Activated naive CD4-positive, alpha-beta T cell treated with anti-CD3 and anti-CD28 coated beads for 36 hours (primary cell): ENCODE measurements at regions of chr3 and their contacts with region 1.

Region 1: DNA sequence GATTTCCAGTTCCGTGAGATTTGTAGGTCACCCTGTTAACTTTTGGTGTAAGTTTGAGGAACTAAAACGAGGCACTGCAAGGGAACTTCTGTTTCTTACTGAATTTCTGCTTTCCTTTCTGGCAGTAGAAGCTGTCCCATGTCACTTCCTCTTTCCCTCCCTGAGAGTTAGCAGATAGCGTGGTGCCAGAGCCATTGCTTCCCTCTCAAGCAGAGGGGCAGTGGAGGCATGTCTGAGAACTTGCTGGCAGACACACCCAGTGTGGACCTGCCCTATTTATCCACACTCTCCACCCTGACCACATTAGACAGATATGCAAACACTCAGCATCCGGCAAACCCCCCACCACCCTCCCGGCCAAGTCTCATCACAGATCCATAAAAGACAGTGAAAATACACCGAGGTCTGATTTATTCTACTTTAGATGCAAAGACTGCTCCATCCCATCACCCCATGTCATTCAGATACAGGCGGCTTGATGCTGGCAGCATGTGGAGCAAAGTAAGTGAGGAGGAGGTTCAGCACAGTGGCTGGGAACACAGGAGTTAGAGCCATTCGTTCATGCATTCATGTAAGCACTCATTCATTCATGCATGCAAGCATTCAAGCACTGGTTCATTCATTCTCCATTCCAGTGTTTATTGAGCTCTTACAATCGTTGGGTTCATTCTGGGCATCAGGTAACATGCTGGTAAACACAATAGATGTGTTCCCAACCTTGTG is 324.7 kb downstream of the SHQ1 start:
- DNase-seq: peak; percentile 30
- H3K4me3 Mint-ChIP-seq: no peak overlapping the region
- H3K27ac Mint-ChIP-seq: no peak overlapping the region
- H3K4me1 Mint-ChIP-seq: peaks cover 44% of the 10 kb centered on the region
- H3K27me3 Mint-ChIP-seq: peaks cover 2% of the 10 kb centered on the region

Region 2: GRCh38 chr3:72375237-72376076 is 148.1 kb before region 1 on chr3:
- CTCF ChIA-PET with region 1: no interaction called
- intact Hi-C with region 1: loop called (anchors 1 kb)
- DNase-seq: peak; percentile 70
- H3K4me3 Mint-ChIP-seq: peak overlapping the region; percentile 20
- H3K27ac Mint-ChIP-seq: peak overlapping the region; percentile 82
- H3K4me1 Mint-ChIP-seq: peaks cover 62% of the 10 kb centered on the region
- H3K27me3 Mint-ChIP-seq: no peaks in the 10 kb centered on the region

Region 3: DNA sequence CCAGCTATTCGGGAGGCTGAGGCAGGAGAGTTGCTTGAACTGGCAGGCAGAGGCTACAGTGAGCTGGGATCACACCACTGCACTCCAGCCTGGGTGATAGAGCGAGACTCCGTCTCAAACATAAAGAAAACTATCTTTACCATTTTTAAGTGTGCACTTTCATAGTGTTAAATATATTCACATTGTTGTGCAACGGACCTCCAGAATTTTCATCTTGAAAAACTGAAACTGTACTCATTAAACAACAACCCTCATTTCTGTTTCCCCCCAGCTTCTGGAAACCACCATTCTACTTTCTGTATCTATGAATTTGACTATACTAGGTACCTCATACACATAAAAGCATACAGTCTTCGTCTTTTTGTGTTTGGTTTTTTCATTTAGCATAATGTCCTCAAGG is 50.4 kb before region 1 on chr3:
- CTCF ChIA-PET with region 1: no interaction called
- intact Hi-C with region 1: loop called (anchors 1 kb)
- DNase-seq: no peak
- H3K4me3 Mint-ChIP-seq: no peak overlapping the region
- H3K27ac Mint-ChIP-seq: peak overlapping the region; percentile 17
- H3K4me1 Mint-ChIP-seq: peaks cover 36% of the 10 kb centered on the region
- H3K27me3 Mint-ChIP-seq: no peaks in the 10 kb centered on the region

Region 4: DNA sequence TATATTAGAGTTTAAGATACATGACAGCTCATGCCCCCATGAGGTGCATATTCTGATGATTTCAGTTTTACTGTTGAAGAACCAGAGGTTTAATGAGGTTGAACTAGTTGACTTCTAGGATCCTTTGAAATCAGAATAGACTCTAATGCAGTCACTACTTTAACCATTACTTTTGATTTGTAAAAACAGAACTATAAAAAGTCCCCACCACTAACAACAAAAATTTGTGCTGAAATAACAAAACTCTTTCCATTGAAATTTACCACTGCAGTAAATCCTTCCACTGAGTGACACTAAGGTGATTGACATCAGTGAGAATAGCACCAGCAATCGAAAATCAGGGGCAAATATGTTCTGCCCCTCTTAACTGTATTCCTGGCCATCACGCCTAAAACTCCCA is 110.5 kb after region 1 on chr3:
- CTCF ChIA-PET with region 1: interaction called, 3 read pairs
- intact Hi-C with region 1: loop called (anchors 1 kb)
- DNase-seq: peak; percentile 19
- H3K4me3 Mint-ChIP-seq: no peak overlapping the region
- H3K27ac Mint-ChIP-seq: no peak overlapping the region
- H3K4me1 Mint-ChIP-seq: peaks cover 39% of the 10 kb centered on the region
- H3K27me3 Mint-ChIP-seq: peaks cover 10% of the 10 kb centered on the region

Region 5: GRCh38 chr3:72847751-72848702 is 324.4 kb after region 1 on chr3 and contains the start of gene SHQ1:
- CTCF ChIA-PET with region 1: interaction called, 3 read pairs
- intact Hi-C with region 1: loop called (anchors 1 kb)
- DNase-seq: peak; percentile 98
- H3K4me3 Mint-ChIP-seq: peak within 1 kb of the TSS; percentile 97
- H3K27ac Mint-ChIP-seq: peak within 1 kb of the TSS; percentile 57
- H3K4me1 Mint-ChIP-seq: peaks cover 47% of the 10 kb centered on the region
- H3K27me3 Mint-ChIP-seq: no peaks in the 10 kb centered on the region
- total RNA-seq, gene SHQ1: 19.9 to 20.5 TPM